Caco-2 (cell line): ENCODE measurements at regions of chr4 and their contacts with region 1.

Region 1: GRCh38 chr4:185209031-185209851 is at the start of gene SNX25:
- DNase-seq: peak; percentile 83 to 91
- H3K4me3 ChIP-seq: peak within 1 kb of the TSS; percentile 66
- H3K4me3 Mint-ChIP-seq: peak within 1 kb of the TSS; percentile 94
- H3K27ac Mint-ChIP-seq: peak within 1 kb of the TSS; percentile 79
- H3K4me1 ChIP-seq: peaks cover 14% of the 10 kb centered on the region; the same call in 1 of the 2 replicates
- H3K4me1 Mint-ChIP-seq: peaks cover 7% of the 10 kb centered on the region
- H3K27me3 ChIP-seq: no peaks in the 10 kb centered on the region
- H3K27me3 Mint-ChIP-seq: no peaks in the 10 kb centered on the region
- CTCF ChIP-seq: no peak
- total RNA-seq, gene SNX25: 9.3 and 10.2 TPM in 2 replicates

Region 2: GRCh38 chr4:185128272-185129119 is 80.7 kb before region 1 on chr4:
- CTCF ChIA-PET with region 1: no interaction called
- POLR2A ChIA-PET with region 1: no interaction called
- intact Hi-C with region 1: no loop called
- DNase-seq: peak in 1 of 2 experiments; percentile 36
- H3K4me3 ChIP-seq: peak overlapping the region; percentile 42
- H3K4me3 Mint-ChIP-seq: peak overlapping the region; percentile 77
- H3K27ac Mint-ChIP-seq: no peak overlapping the region
- H3K4me1 ChIP-seq: no peaks in the 10 kb centered on the region
- H3K4me1 Mint-ChIP-seq: no peaks in the 10 kb centered on the region
- H3K27me3 ChIP-seq: no peaks in the 10 kb centered on the region
- H3K27me3 Mint-ChIP-seq: peaks cover 5% of the 10 kb centered on the region
- CTCF ChIP-seq: no peak

Region 3: DNA sequence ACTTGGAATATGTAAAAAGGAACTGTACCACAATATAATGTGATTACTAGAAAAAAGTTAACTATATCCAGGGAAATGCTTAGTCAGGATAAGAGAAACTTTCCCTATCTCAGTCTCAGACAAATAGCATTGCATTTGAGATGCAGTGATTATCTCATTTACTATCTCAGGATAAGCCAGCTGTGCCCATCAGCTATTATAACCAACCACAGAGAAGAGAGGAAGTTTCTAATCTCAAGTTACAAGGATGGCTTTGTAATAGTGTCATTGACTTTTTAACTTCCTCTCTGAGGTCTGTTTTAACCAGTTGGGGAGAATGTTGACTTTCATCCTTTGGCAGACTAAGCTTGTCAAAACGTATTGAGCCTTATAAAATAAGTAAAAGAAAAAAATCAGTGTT is 56.7 kb after region 1 on chr4:
- CTCF ChIA-PET with region 1: no interaction called
- POLR2A ChIA-PET with region 1: no interaction called
- intact Hi-C with region 1: loop called (anchors 1 kb)
- DNase-seq: no peak
- H3K4me3 ChIP-seq: no peak overlapping the region
- H3K4me3 Mint-ChIP-seq: no peak overlapping the region
- H3K27ac Mint-ChIP-seq: no peak overlapping the region
- H3K4me1 ChIP-seq: peaks cover 18% of the 10 kb centered on the region
- H3K4me1 Mint-ChIP-seq: peaks cover 20% of the 10 kb centered on the region
- H3K27me3 ChIP-seq: no peaks in the 10 kb centered on the region
- H3K27me3 Mint-ChIP-seq: no peaks in the 10 kb centered on the region
- CTCF ChIP-seq: no peak

Region 4: GRCh38 chr4:185286571-185286970 is 77.3 kb after region 1 on chr4:
- CTCF ChIA-PET with region 1: no interaction called
- POLR2A ChIA-PET with region 1: no interaction called
- intact Hi-C with region 1: loop called (anchors 5 kb)
- DNase-seq: no peak
- H3K4me3 ChIP-seq: no peak overlapping the region
- H3K4me3 Mint-ChIP-seq: no peak overlapping the region
- H3K27ac Mint-ChIP-seq: no peak overlapping the region
- H3K4me1 ChIP-seq: peaks cover 5% of the 10 kb centered on the region
- H3K4me1 Mint-ChIP-seq: peaks cover 32% of the 10 kb centered on the region
- H3K27me3 ChIP-seq: no peaks in the 10 kb centered on the region
- H3K27me3 Mint-ChIP-seq: no peaks in the 10 kb centered on the region
- CTCF ChIP-seq: no peak

Region 5: GRCh38 chr4:185304944-185305690 is 95.9 kb after region 1 on chr4:
- CTCF ChIA-PET with region 1: interaction called, 3 read pairs
- POLR2A ChIA-PET with region 1: interaction called, 3 read pairs
- intact Hi-C with region 1: loop called (anchors 1 kb)
- DNase-seq: peak; percentile 39 to 44
- H3K4me3 ChIP-seq: no peak overlapping the region
- H3K4me3 Mint-ChIP-seq: no peak overlapping the region
- H3K27ac Mint-ChIP-seq: peak overlapping the region; percentile 64
- H3K4me1 ChIP-seq: peaks cover 15% of the 10 kb centered on the region
- H3K4me1 Mint-ChIP-seq: peaks cover 18% of the 10 kb centered on the region
- H3K27me3 ChIP-seq: no peaks in the 10 kb centered on the region
- H3K27me3 Mint-ChIP-seq: no peaks in the 10 kb centered on the region
- CTCF ChIP-seq: peak; percentile 24 to 55